ENCODE measurements at regions of chr2 and their contacts with region 1.

Region 1: GRCh38 chr2:106085181-106085940 is 108.7 kb downstream of the UXS1 start:
- DNase-seq: peak in 2 of 4 experiments; percentile 32 to 41
- ATAC-seq: peak; percentile 96
- H3K4me3 ChIP-seq: no peak overlapping the region
- H3K27ac ChIP-seq: no peak overlapping the region
- H3K4me1 ChIP-seq: no peaks in the 10 kb centered on the region
- H3K27me3 ChIP-seq: peaks cover 4 to 8% of the 10 kb centered on the region in 2 experiments; a peak in 3 of 5 replicates
- CTCF ChIP-seq: peak; percentile 54 to 57 (median 55); a peak in 4 of 6 replicates
- EP300 ChIP-seq: no peak
- POLR2A ChIP-seq: no peak
- RAD21 ChIP-seq: peak; percentile 57 to 71

Region 2: DNA sequence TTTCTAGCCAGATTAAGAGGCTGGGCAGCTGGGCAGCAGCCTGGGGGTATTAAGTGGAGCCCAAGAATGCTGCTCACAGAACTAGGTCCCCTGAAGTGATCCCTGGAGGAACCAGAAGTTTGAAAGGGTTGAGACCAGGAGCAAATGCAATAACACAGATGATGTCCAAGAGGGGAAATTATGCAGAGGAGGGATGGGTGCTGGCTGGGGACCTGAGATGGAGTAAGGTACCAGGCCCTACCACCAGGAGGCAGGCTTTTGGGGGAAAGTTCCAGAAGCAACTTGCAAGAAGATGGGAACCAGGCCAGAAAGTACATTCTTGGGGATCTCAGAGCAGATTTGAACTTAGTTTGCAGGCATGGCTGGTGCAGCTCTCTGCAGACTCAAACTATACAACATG is 165.5 kb before region 1 on chr2:
- CTCF ChIA-PET with region 1: no interaction called
- POLR2A ChIA-PET with region 1: no interaction called
- in situ Hi-C with region 1: no loop called
- intact Hi-C with region 1: loop called (anchors 10 kb)
- DNase-seq: peak; percentile 48 to 68 (median 58)
- ATAC-seq: peak; percentile 82
- H3K4me3 ChIP-seq: no peak overlapping the region
- H3K27ac ChIP-seq: no peak overlapping the region
- H3K4me1 ChIP-seq: no peaks in the 10 kb centered on the region; a peak in 1 of 5 replicates
- H3K27me3 ChIP-seq: peaks cover 4 to 32% of the 10 kb centered on the region in 2 experiments
- CTCF ChIP-seq: peak; percentile 62 to 76 (median 64)
- EP300 ChIP-seq: no peak
- POLR2A ChIP-seq: no peak
- RAD21 ChIP-seq: peak; percentile 26 to 62

Measured in K562 (cell line).